ENCODE measurements at regions of chr10 and their contacts with region 1.

Region 1: GRCh38 chr10:58177362-58177947 is 90.2 kb downstream of the IPMK start:
- DNase-seq: no peak
- H3K4me3 ChIP-seq: no peak overlapping the region
- H3K27ac ChIP-seq: no peak overlapping the region
- H3K4me1 ChIP-seq: no peaks in the 10 kb centered on the region
- H3K27me3 ChIP-seq: no peaks in the 10 kb centered on the region
- CTCF ChIP-seq: peak; percentile 47 to 80 (median 72)
- POLR2A ChIP-seq: no peak

Region 2: GRCh38 chr10:58291538-58292174 is 114.2 kb after region 1 on chr10:
- intact Hi-C with region 1: loop called (anchors 2 to 5 kb)
- DNase-seq: peak; percentile 27 to 65 (median 37)
- H3K4me3 ChIP-seq: no peak overlapping the region
- H3K27ac ChIP-seq: no peak overlapping the region
- H3K4me1 ChIP-seq: no peaks in the 10 kb centered on the region
- H3K27me3 ChIP-seq: no peaks in the 10 kb centered on the region
- CTCF ChIP-seq: peak; percentile 64 to 93 (median 81)
- POLR2A ChIP-seq: no peak

Region 3: GRCh38 chr10:58319599-58319998 is 142.1 kb after region 1 on chr10:
- intact Hi-C with region 1: no loop called
- DNase-seq: peak in 1 of 7 donors; percentile 29
- H3K4me3 ChIP-seq: no peak overlapping the region
- H3K27ac ChIP-seq: no peak overlapping the region
- H3K4me1 ChIP-seq: no peaks in the 10 kb centered on the region
- H3K27me3 ChIP-seq: no peaks in the 10 kb centered on the region
- CTCF ChIP-seq: peak in 2 of 6 experiments; percentile 10 to 31
- POLR2A ChIP-seq: no peak

Region 4: GRCh38 chr10:58393317-58393716 is 215.9 kb after region 1 on chr10:
- intact Hi-C with region 1: loop called in 1 of 2 experiments (anchors 10 kb)
- DNase-seq: no peak
- H3K4me3 ChIP-seq: no peak overlapping the region
- H3K27ac ChIP-seq: no peak overlapping the region
- H3K4me1 ChIP-seq: peaks cover 0 to 4% of the 10 kb centered on the region in 2 donors
- H3K27me3 ChIP-seq: no peaks in the 10 kb centered on the region
- CTCF ChIP-seq: peak in 4 of 6 experiments; percentile 16 to 38 (median 16)
- POLR2A ChIP-seq: no peak